Adrenal gland (tissue), 19 donors: ENCODE measurements at regions of chr6 and their contacts with region 1.

Region 1: GRCh38 chr6:52893803-52894649 is 15.5 kb downstream of the GSTA3 start:
- DNase-seq: peak in 1 of 7 donors; percentile 13
- H3K4me3 ChIP-seq: no peak overlapping the region
- H3K27ac ChIP-seq: peak overlapping the region; percentile 63 to 85 (median 75)
- H3K4me1 ChIP-seq: peaks cover 18 to 20% of the 10 kb centered on the region in 2 donors
- H3K27me3 ChIP-seq: no peaks in the 10 kb centered on the region
- CTCF ChIP-seq: no peak
- POLR2A ChIP-seq: no peak

Region 2: DNA sequence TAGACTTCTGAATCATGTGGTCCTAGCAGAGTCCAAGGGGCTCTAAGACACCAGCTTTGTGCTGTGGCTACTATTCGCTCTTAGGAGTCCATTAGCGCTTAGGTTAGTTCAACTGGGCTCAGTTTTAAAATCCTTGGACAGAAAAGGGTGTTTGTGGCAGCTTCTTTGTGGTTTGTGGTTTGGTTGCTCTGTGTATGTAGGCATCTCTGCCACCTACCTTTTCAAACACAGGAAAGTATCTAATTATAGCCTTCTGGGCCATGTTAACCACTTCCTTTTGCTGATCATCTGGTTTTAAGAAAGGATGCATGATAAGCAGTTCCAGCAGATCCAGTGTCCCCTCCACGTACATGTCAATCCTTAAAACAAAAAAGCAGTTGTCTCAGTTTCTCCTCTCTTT is 90.2 kb after region 1 on chr6:
- intact Hi-C with region 1: loop called in 1 of 2 experiments (anchors 10 kb)
- DNase-seq: no peak
- H3K4me3 ChIP-seq: no peak overlapping the region
- H3K27ac ChIP-seq: no peak overlapping the region
- H3K4me1 ChIP-seq: peaks cover under 1 to 6% of the 10 kb centered on the region in 2 donors
- H3K27me3 ChIP-seq: no peaks in the 10 kb centered on the region
- CTCF ChIP-seq: no peak
- POLR2A ChIP-seq: no peak